HAP-1 (cell line): ENCODE measurements at regions of chr20 and their contacts with region 1.

Region 1: DNA sequence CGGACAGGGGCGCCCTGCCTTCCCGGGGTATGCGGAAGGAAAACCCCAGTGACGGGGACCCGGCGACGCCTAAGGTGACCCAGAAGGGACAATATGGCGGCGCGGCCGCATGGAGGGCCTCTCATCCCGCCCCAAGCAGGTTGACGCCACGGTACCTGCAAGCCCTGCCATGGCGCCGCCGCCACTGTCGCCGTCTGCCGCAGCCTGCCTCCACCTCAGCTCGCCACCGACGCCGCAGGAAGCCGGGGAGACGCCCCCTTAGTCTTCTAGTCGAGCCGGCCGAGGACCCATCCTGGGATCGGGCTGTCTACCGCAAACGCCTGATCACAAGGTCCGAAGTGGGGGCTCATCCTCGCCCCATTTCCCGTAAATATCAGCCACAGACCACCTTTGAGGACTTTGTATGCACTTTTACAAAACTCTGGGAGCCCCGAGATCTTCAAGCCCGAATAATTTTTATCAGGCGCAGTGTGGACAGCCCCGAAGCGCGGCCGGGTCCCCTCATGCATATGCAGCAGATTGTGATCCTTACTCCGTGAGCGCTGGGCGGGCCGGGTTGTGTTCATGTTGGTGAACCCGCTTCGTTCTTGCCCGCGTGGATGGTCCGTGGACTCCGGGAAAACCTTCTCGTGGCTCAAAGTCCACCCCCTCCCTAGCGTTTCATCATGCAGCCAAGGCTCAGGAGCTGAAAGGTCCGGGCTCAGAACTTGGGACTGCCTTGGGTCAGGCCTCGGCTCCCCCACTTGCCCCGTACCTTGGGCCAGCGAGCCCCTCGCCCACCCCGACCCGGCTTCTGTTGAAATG is at the start of gene BLCAP:
- DNase-seq: peak; percentile 79 to 94
- H3K4me3 ChIP-seq: peak within 1 kb of the TSS; percentile 98
- H3K4me1 ChIP-seq: peaks cover 12% of the 10 kb centered on the region
- H3K27me3 ChIP-seq: no peaks in the 10 kb centered on the region

Region 2: DNA sequence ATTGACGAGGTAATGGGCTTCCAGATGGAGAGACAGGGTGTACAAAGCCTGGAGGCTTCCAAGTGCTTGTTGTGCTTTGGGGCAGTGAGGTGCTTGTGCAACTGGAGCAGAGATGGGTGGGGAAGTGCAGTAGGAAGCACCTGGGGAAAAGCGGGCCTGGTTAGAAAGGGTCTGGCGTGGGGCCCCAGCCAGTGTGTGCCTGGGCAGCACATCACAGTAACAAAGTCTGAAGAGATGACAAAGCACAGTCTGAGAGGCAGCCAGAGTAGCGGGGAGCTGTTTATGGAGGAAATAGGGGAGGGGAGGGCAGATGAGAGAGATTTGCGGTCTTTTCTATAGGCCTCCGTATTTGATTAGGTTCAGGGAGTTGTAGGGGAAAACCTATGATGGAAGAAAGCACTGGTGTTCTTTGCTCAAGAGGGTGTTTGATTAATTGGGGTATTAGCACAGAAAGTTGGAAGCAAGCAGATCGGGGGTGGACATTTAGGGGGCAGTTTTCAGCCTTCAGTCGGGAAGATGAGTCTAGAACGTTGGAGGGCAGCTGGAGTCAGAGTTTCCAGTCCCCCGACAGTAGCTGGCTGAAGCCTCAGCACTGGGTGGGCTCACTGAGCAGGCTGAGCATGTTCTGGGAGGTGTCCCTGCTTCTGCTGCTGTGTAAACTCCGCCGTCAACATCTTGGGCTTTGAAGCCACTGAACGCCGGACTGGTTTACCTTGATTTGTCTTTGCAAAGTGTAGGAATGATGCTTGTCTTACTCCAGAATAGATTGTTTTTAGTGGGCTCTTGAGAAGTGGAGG is 333.0 kb before region 1 on chr20:
- in situ Hi-C with region 1: loop called (anchors 5 kb)
- DNase-seq: no peak
- H3K4me3 ChIP-seq: no peak overlapping the region
- H3K4me1 ChIP-seq: no peaks in the 10 kb centered on the region
- H3K27me3 ChIP-seq: no peaks in the 10 kb centered on the region

Region 3: DNA sequence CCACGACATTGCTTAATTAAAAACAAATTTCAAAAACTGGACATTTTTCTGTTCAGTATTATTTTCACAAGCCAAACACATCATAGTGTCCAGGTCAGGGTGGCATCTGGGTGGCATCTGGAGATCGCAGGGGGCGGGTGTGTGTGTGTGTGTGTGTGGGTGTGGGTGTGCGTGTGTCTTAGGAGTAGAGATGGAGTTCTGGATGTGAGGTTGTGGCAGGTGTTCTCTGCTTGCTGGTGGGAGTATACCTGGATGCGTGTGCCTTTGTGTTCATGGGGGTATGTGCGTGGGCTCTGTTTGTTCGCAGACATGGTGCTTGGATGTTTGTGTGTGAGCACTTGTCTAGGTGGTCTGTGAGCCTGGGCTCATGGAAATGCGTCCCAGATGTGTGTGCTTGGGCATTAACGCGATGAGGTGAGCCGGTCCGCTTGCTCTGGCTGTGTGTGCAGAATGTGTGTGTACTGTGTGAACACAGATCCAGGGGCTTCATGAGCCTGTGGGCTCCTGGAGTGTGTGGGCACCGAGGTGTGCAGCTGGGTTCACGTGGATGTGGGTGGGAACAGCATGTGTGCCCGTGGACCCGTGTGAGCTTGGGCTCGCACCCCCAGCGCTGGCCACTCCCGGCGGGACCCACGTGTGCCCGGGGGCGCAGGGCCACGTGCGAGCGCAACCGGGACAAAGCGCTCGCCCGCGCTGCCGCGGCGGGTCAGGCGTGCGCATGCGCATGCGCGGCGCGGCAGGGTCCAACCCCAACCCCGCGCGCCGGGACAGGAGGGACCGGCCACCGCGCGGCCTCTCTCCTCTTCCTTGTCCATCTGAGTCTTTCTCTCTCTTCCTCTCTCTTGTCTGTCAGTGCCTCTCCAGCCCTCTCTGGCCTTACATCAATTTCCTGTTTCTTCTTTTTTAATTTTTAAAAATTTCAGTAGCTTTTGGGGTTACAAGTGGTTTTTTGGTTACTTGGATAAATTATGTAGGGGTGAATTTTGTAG is 121.5 kb before region 1 on chr20:
- in situ Hi-C with region 1: loop called (anchors 5 kb)
- DNase-seq: peak; percentile 55 to 70
- H3K4me3 ChIP-seq: no peak overlapping the region
- H3K4me1 ChIP-seq: peaks cover 8% of the 10 kb centered on the region
- H3K27me3 ChIP-seq: no peaks in the 10 kb centered on the region

Region 4: GRCh38 chr20:38033310-38034107 is 505.7 kb after region 1 on chr20 and contains the starts of genes RPRD1B and TTI1:
- in situ Hi-C with region 1: no loop called
- DNase-seq: peak; percentile 91
- H3K4me3 ChIP-seq: peak within 1 kb of the TSS; percentile 68
- H3K4me1 ChIP-seq: peaks cover 22% of the 10 kb centered on the region
- H3K27me3 ChIP-seq: no peaks in the 10 kb centered on the region